ENCODE measurements at regions of chr11 and their contacts with region 1.

Region 1: GRCh38 chr11:124470516-124471227 is 25.2 kb upstream of the OR8B8 start:
- DNase-seq: no peak
- ATAC-seq: peak; percentile 72

Region 2: GRCh38 chr11:123719452-123719851 is 751.2 kb before region 1 on chr11:
- intact Hi-C with region 1: no loop called
- DNase-seq: no peak
- ATAC-seq: no peak

Region 3: GRCh38 chr11:124359566-124359965 is 111.1 kb before region 1 on chr11:
- intact Hi-C with region 1: no loop called
- DNase-seq: no peak
- ATAC-seq: no peak

Region 4: DNA sequence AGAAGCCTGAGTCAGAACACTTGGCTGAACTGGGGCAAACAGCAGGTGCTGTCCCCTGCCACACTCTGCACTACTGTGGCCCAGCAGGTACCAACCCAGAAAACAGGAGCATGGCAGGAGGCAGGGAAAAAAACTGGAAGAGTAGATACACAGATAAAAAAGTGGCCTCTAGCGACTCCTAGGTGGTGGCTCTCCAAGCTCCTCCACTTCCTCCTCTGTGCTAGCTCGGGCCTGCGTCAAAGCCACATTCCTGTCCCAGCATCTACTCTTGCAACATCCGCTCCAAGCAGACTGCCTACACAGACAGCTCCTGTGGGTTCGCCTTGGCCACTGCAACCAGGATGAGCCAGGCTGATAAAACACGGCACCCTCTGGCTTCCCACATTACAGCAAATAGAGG is 65.8 kb after region 1 on chr11:
- intact Hi-C with region 1: loop called (anchors 2 kb)
- DNase-seq: peak; percentile 46
- ATAC-seq: peak; percentile 88

Region 5: DNA sequence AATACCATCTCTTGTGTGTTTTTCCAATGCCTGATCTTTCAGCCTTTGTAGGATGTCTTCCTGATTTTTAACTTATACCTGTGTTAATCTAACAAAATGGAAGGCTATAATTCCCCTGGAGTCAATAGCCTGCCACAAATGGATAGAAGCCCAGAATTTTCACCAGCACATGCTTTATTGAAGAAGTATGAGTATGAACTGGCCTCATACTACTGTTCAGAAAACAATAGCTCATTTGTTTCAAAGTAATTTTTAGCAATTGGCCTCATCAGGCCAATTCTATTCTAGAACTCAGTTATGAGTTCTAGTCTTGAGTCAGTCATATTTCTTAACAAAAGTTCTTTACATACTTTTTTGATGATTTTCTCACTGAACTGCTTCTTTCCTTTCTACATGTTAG is 551.9 kb after region 1 on chr11:
- intact Hi-C with region 1: no loop called
- DNase-seq: no peak
- ATAC-seq: no peak